ENCODE measurements at regions of chr15 and their contacts with region 1.

Region 1: GRCh38 chr15:59725172-59725486 is 36.0 kb upstream of the BNIP2 start:
- DNase-seq: no peak
- H3K4me3 ChIP-seq: no peak overlapping the region
- H3K27ac ChIP-seq: no peak overlapping the region
- H3K4me1 ChIP-seq: no peaks in the 10 kb centered on the region
- H3K27me3 ChIP-seq: peaks cover 42% of the 10 kb centered on the region
- CTCF ChIP-seq: no peak

Region 2: DNA sequence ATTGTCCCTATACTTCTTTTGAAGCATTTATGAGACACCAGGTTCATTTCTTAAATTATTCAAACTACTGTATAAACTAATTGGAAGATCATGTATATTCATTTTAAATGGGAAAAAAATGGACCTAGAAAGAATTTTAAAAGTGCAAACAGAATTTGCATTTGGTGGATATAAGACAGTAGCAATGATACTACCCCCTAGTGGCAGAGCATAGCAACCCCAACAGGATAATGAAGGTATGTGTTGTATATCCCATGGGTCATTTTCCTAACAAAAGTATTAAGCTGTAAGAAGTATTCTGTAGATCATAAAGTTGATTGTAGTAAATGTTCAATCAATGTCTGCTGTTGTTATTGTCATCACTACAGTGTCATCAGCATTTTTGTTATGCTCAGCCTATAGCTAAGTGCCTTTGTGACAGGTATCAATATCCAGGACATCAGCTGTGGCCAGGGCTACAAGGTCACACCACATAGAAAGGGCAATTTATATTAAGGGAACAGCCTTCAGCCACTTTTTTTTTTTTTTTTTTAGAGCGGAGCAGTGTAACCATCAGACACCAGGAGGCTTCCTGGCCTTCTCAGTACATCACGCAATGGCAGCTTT is 454.8 kb after region 1 on chr15:
- intact Hi-C with region 1: loop called (anchors 10 kb)
- DNase-seq: no peak
- H3K4me3 ChIP-seq: no peak overlapping the region
- H3K27ac ChIP-seq: no peak overlapping the region
- H3K4me1 ChIP-seq: no peaks in the 10 kb centered on the region
- H3K27me3 ChIP-seq: peaks cover 51% of the 10 kb centered on the region
- CTCF ChIP-seq: peak; percentile 83

Region 3: GRCh38 chr15:60326824-60327654 is 601.9 kb after region 1 on chr15:
- intact Hi-C with region 1: loop called (anchors 10 kb)
- DNase-seq: no peak
- H3K4me3 ChIP-seq: no peak overlapping the region
- H3K27ac ChIP-seq: no peak overlapping the region
- H3K4me1 ChIP-seq: peaks cover 13% of the 10 kb centered on the region
- H3K27me3 ChIP-seq: peaks cover 76% of the 10 kb centered on the region
- CTCF ChIP-seq: peak; percentile 85

Measured in left ventricle myocardium inferior (tissue), 1 donor.